BJ (cell line): ENCODE measurements at regions of chr1 and their contacts with region 1.

Region 1: GRCh38 chr1:11719313-11720032 is 16.5 kb upstream of the AGTRAP start:
- DNase-seq: no peak
- H3K4me3 ChIP-seq: peak overlapping the region; percentile 21; the same call in 1 of the 2 replicates
- H3K27me3 ChIP-seq: peaks cover 2% of the 10 kb centered on the region
- CTCF ChIP-seq: peak; percentile 97

Region 2: DNA sequence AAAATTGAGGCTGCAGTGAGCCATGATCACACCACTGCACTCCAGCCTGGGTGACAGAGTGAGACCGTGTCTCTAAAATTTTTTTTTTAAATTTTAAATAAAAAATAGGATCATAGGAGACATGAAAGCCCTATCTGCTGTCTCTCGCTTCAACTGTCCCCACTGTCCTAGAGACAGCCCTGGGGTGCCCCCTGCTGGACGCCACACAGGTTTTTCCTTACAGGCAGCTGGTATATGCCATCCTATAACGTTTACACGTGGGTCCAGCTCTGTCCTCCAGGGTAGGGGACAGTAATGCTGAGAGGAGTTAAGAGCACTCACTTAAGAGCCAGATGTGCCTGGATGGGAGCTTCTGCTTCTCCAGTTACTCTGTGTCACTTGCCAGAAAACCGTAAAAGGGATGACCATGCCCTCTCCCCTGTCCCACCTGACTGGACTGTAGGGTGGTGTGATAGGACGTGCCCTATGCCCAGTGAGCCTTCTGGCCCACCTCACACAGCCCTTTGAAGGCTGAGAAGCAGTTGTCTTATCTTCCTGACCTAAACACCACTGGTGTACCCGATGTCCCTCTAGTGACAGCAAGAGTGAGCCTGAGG is 73.7 kb before region 1 on chr1:
- CTCF ChIA-PET with region 1: interaction called, 86 read pairs
- POLR2A ChIA-PET with region 1: no interaction called
- DNase-seq: no peak
- H3K4me3 ChIP-seq: no peak overlapping the region
- H3K27me3 ChIP-seq: peaks cover 6% of the 10 kb centered on the region
- CTCF ChIP-seq: peak; percentile 84

Region 3: DNA sequence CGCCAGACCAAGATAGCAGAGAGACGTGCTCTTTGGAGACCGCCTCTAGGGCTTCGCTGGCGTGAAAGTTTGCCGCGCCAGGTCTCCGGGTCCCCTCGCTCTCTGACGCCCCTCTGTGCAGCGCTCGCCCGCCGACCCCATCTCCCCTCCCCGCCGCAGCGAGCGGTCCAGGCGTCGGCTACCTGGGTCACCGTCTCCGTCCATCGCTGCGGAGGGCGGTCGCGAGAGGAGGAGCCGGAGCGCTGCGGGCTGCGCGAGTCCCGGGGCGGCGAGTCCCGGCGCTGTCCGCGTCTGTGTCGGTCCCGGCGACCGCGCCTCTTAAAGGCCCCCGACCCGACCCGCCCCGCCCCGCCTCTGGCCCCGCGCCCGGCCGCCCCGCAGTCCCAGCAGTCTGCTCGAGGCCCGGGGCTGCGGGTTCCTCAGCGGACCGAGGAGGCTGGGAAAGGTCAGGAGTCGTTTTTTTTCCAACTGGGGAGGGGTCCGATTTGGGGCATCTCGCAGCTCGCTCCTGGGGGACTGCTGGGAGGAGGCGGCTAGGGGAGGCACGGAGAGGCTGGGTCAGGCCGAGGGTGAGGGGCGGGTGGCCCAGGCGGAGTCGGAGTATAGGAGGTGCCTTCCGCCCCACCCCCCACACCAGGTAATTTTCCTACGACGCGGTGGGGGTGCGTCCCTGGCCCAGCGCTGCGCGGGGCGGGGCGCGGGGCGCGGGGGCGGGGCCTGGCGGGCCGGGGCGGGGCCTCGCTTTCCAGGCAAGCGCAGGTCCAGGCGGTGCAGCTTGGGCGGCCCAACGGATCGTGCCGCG is 65.1 kb before region 1 on chr1 and contains the starts of genes FBXO2 and FBXO44:
- CTCF ChIA-PET with region 1: interaction called, 86 read pairs
- POLR2A ChIA-PET with region 1: no interaction called
- DNase-seq: no peak
- H3K4me3 ChIP-seq: peak within 1 kb of the TSS; percentile 84
- H3K27me3 ChIP-seq: 0 out of 2 replicates have a peak, but pooled peaks cover 4% of the 10 kb centered on the region
- CTCF ChIP-seq: no peak
- polyA plus RNA-seq, gene FBXO2: 1.5 and 2.2 TPM in 2 replicates
- polyA plus RNA-seq, gene FBXO44: 15.1 and 24.4 TPM in 2 replicates

Region 4: GRCh38 chr1:11681071-11681771 is 38.3 kb before region 1 on chr1 and contains the start of gene MAD2L2:
- CTCF ChIA-PET with region 1: interaction called, 17 read pairs
- POLR2A ChIA-PET with region 1: no interaction called
- DNase-seq: peak; percentile 44
- H3K4me3 ChIP-seq: peak within 1 kb of the TSS; percentile 98
- H3K27me3 ChIP-seq: peaks cover 2% of the 10 kb centered on the region
- CTCF ChIP-seq: no peak
- polyA plus RNA-seq, gene MAD2L2: 49.5 and 77.1 TPM in 2 replicates

Region 5: DNA sequence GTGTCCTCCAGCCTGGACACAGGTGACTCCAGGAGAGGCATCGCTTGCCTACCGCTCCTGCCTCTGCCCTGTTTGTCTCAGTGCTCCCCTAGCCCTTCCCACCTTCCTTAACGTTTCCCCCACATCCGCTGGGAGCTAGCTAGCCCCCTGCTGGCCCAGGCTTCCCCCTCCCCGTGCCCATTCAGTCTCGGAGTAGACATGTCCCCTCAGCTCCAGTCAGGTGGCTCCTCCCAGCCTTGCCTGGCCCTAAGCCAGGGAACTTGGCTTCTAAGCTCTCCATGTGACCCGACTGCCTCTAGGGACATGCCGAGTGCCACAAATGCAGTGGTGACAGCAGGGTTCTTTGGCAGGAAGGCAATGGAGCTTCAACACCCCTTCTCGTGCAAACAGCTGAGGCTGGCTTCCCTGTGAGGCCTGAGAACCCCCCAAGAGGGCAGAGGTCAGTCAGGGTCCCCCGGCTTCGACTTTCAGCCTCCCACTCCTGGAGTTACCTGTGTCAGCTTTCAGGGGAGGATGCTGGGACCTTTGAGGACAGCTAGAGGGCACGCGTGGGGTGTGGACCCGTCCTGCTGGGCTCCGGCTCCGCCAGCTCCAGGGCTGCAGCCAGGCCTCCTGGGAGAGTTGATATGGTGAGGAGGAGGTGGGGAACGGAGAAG is 11.7 kb before region 1 on chr1:
- CTCF ChIA-PET with region 1: interaction called, 37 read pairs
- POLR2A ChIA-PET with region 1: no interaction called
- DNase-seq: no peak
- H3K4me3 ChIP-seq: no peak overlapping the region
- H3K27me3 ChIP-seq: peaks cover 14% of the 10 kb centered on the region
- CTCF ChIP-seq: no peak

Region 6: GRCh38 chr1:11735854-11736745 is 16.6 kb after region 1 on chr1 and contains the start of gene AGTRAP:
- CTCF ChIA-PET with region 1: interaction called, 14 read pairs
- POLR2A ChIA-PET with region 1: no interaction called
- DNase-seq: peak; percentile 48
- H3K4me3 ChIP-seq: peak within 1 kb of the TSS; percentile 85
- H3K27me3 ChIP-seq: no peaks in the 10 kb centered on the region
- CTCF ChIP-seq: 0 out of 2 replicates have a peak, but pooled peaks have one; percentile 13
- polyA plus RNA-seq, gene AGTRAP: 37.9 and 64.5 TPM in 2 replicates

Region 7: GRCh38 chr1:11761988-11762406 is 42.5 kb after region 1 on chr1 and contains the start of gene C1orf167:
- CTCF ChIA-PET with region 1: no interaction called
- POLR2A ChIA-PET with region 1: no interaction called
- DNase-seq: no peak
- H3K4me3 ChIP-seq: no peak within 1 kb of the TSS
- H3K27me3 ChIP-seq: peaks cover 5% of the 10 kb centered on the region
- CTCF ChIP-seq: no peak
- polyA plus RNA-seq, gene C1orf167: 0.48 and 0.54 TPM in 2 replicates